Activated CD4-positive, alpha-beta memory T cell treated with anti-CD3 and anti-CD28 coated beads for 36 hours (primary cell): ENCODE measurements at regions of chr3 and their contacts with region 1.

Region 1: GRCh38 chr3:17233398-17233800 is 348.6 kb downstream of the PLCL2 start:
- DNase-seq: peak; percentile 25
- H3K4me3 Mint-ChIP-seq: no peak overlapping the region
- H3K27ac Mint-ChIP-seq: no peak overlapping the region
- H3K4me1 Mint-ChIP-seq: peaks cover 21% of the 10 kb centered on the region
- H3K27me3 Mint-ChIP-seq: no peaks in the 10 kb centered on the region

Region 2: DNA sequence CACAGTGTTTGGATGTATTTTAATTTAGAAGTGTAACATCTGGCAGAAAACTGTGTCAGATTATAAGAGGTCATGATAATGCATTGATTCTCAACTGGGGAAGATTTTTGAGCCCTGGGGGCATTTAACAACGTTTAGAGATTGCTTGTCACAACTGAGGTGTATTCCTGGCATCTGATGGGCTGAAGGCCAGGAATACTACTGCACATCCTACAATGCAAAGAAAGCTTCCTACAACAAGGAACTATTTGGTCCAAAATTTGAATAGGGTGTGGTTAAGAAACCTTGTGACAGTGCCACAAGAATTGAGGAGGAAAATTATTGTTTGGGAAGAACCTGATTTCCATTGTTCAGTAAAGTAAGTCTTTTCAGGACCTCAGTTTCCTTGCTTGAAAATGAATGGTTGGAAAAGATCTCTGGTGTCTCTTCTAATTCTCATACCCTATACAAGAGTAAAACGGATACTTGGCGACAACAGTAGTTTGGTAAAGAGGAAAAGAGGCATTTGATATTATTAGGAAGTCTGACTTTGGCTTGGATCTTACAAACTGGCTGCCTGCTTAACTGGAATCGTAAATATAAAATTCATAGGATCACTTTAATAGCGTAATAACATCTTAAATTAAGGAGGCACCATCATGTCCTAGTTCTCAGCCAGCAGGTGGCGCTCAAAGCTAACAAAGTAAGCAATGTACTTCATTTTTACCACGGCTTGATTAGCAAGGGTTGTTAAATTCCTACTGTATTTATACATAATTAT is 632.4 kb before region 1 on chr3:
- CTCF ChIA-PET with region 1: interaction called, 79 read pairs
- POLR2A ChIA-PET with region 1: no interaction called
- intact Hi-C with region 1: loop called (anchors 1 kb)
- DNase-seq: peak; percentile 81
- H3K4me3 Mint-ChIP-seq: no peak overlapping the region
- H3K27ac Mint-ChIP-seq: no peak overlapping the region
- H3K4me1 Mint-ChIP-seq: peaks cover 24% of the 10 kb centered on the region
- H3K27me3 Mint-ChIP-seq: peaks cover 10% of the 10 kb centered on the region

Region 3: DNA sequence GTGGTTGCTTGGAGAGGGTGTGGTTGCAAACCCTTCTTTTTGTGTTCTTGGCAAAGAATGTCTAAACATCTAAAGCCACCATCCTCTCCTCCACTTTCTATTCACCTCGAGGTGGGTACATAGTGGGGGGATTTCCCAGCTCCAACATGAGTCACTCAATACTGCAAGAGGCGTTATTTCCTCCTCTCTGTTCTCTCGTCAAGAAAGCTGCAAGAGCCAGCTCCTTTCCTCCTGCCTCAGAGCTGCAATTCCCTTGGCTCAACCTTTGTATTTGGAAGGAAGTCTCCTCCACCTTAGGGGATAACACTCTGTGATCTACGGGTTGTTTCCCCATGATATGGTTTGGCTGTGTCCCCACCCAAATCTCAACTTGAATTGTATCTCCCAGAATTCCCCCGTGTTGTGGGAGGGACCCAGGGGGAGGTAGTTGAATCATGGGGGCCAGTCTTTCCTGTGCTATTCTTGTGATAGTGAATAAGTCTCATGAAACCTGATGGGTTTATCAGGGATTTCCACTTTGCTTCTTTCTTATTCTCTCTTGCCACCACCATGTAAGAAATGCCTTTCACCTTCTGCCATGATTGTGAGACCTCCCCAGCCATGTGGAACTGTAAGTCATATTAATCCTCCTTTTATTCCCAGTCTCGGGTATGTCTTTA is 210.3 kb before region 1 on chr3:
- CTCF ChIA-PET with region 1: interaction called, 3 read pairs
- POLR2A ChIA-PET with region 1: no interaction called
- intact Hi-C with region 1: loop called (anchors 5 kb)
- DNase-seq: peak; percentile 72
- H3K4me3 Mint-ChIP-seq: peak overlapping the region; percentile 52
- H3K27ac Mint-ChIP-seq: peak overlapping the region; percentile 87
- H3K4me1 Mint-ChIP-seq: peaks cover 73% of the 10 kb centered on the region
- H3K27me3 Mint-ChIP-seq: no peaks in the 10 kb centered on the region

Region 4: GRCh38 chr3:17088602-17089313 is 144.6 kb before region 1 on chr3:
- CTCF ChIA-PET with region 1: no interaction called
- POLR2A ChIA-PET with region 1: no interaction called
- intact Hi-C with region 1: loop called (anchors 5 kb)
- DNase-seq: peak; percentile 42
- H3K4me3 Mint-ChIP-seq: no peak overlapping the region
- H3K27ac Mint-ChIP-seq: no peak overlapping the region
- H3K4me1 Mint-ChIP-seq: peaks cover 30% of the 10 kb centered on the region
- H3K27me3 Mint-ChIP-seq: no peaks in the 10 kb centered on the region

Region 5: GRCh38 chr3:17195856-17196604 is 37.4 kb before region 1 on chr3:
- CTCF ChIA-PET with region 1: no interaction called
- POLR2A ChIA-PET with region 1: no interaction called
- intact Hi-C with region 1: no loop called
- DNase-seq: no peak
- H3K4me3 Mint-ChIP-seq: no peak overlapping the region
- H3K27ac Mint-ChIP-seq: no peak overlapping the region
- H3K4me1 Mint-ChIP-seq: peaks cover 6% of the 10 kb centered on the region
- H3K27me3 Mint-ChIP-seq: no peaks in the 10 kb centered on the region

Region 6: DNA sequence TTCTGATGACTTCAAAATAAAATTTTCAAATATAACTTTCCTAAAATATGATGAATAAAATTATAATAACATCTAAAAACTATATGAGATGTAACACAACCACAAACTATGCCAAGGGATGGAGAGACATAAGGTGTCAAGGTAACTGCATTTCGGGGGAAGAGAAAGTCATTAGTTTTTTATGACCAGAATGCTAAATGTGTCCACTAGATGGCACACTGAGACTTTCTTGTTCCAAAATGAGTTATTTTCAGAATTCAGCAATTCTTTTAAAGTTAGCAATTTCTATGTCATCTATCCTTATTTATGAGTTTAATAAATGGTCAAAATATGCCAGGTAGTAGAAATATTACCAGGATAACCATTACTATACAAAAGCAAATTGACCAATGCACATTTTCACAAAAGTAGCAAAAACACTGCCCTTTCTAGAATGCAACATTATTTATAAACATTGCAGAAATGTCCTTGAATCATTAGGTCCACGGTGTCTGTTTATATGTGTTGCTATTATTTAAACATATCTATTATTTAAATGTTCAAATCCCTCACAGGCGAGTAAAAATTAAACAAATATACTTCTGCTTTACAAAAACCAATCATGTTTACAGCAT is 25.5 kb after region 1 on chr3:
- CTCF ChIA-PET with region 1: no interaction called
- POLR2A ChIA-PET with region 1: no interaction called
- intact Hi-C with region 1: no loop called
- DNase-seq: no peak
- H3K4me3 Mint-ChIP-seq: no peak overlapping the region
- H3K27ac Mint-ChIP-seq: no peak overlapping the region
- H3K4me1 Mint-ChIP-seq: no peaks in the 10 kb centered on the region
- H3K27me3 Mint-ChIP-seq: no peaks in the 10 kb centered on the region